ENCODE measurements at regions of chr3 and their contacts with region 1.

Region 1: GRCh38 chr3:133644768-133645167 is 17.0 kb downstream of the TOPBP1 start:
- ATAC-seq: peak in 3 of 8 experiments; percentile 85 to 96 (median 93)
- H3K4me3 ChIP-seq: no peak overlapping the region
- H3K27ac ChIP-seq: no peak overlapping the region
- H3K4me1 ChIP-seq: no peaks in the 10 kb centered on the region

Region 2: DNA sequence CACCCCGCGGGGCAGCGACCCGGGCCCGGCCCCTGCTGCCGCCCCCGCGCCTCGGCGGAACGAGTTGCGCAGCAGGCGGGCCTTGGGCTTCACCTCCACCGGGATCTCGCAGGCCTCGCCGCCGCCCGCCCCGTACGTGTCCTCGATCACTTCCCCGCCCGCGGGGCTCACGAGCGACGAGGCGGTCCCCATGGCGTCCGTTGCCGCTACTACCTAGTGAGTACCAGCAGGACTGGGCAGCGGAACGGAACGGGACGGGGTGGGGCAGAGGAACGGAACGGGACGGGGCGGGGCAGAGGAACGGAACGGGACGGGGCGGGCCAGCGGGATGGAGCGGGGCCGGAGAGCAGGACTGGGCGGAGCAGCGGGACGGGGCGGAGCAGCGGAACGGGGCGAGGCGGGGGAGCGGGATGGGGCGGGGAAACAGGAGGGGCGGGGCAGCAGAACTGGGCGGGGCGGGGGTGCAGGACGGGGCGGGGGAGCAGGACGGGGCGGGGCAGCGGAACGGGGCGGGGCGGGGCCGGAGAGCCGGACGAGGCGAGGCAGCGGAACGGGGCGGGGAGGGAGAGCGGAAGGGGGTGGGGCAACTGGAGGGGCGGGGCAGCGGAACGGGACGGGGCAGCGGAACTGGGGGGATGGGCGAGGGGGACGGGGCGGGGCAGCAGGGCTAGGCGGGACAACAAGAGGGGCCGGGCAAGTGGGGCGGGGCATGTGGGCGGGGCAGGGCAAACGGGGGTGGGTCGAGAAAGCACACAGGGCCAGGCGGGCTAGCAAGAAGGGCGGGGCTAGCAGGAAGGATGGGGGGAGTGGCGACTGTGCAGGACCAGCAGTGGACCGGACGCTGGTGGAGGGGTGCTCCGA is 922.4 kb before region 1 on chr3 and contains the start of gene NPHP3:
- in situ Hi-C with region 1: loop called in 1 of 9 experiments (anchors 25 kb)
- ATAC-seq: peak; percentile 80 to 93 (median 90)
- H3K4me3 ChIP-seq: peak within 1 kb of the TSS; percentile 52 to 99 (median 97)
- H3K27ac ChIP-seq: peak within 1 kb of the TSS; percentile 76 to 89
- H3K4me1 ChIP-seq: peaks cover 14% of the 10 kb centered on the region in 2 donors
- total RNA-seq, gene NPHP3: 8.2 to 42.9 (median 16.7) TPM

Region 3: GRCh38 chr3:133401374-133402135 is 243.2 kb before region 1 on chr3:
- in situ Hi-C with region 1: no loop called
- ATAC-seq: peak in 5 of 8 experiments; percentile 88 to 96 (median 94)
- H3K4me3 ChIP-seq: no peak overlapping the region
- H3K27ac ChIP-seq: peak overlapping the region in 1 of 2 donors; percentile 62
- H3K4me1 ChIP-seq: peaks cover 25 to 33% of the 10 kb centered on the region in 2 donors